Right ventricle myocardium superior (tissue), 1 donor: ENCODE measurements at regions of chr6 and their contacts with region 1.

Region 1: GRCh38 chr6:32402812-32403211 is 4.2 kb downstream of the BTNL2 start:
- DNase-seq: no peak
- ATAC-seq: no peak

Region 2: GRCh38 chr6:32244946-32245398 is 157.8 kb before region 1 on chr6:
- intact Hi-C with region 1: loop called (anchors 10 kb)
- DNase-seq: peak; percentile 87
- ATAC-seq: peak; percentile 95